ENCODE measurements at regions of chr21 and their contacts with region 1.

Region 1: DNA sequence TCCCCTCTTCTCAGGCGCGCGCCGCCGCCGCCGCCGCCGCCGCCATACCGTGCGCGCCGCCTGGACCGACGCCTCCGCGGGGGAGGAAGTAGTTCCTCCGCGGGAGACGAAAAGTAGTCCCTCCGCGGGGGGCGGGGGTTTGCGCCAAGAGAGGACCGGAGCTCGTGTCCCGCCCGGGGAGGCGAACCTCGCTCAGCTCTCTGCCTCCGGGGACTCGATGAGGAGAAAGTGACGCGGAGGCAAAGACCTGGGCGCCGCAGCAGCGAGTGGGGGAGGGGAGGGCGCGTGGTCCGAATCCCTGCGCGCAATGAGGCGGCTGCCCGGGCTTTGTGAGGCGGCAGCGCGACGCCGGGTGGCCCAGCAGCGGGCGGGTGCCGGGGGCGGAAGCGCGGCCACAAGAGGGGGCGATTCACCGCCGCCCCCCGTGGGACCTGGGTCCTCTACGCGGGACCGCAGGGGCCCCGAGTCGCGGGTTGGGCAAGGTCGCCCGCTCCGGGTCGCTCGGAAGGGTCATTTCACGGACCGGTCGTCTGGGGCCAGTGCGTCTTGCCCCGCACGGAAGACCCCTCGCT is at the start of gene BRWD1:
- DNase-seq: peak; percentile 61
- H3K4me3 ChIP-seq: peak within 1 kb of the TSS; percentile 77 to 93
- H3K27ac ChIP-seq: peak within 1 kb of the TSS; percentile 95 to 96
- H3K4me1 ChIP-seq: peaks cover 4% of the 10 kb centered on the region
- H3K27me3 ChIP-seq: no peaks in the 10 kb centered on the region
- CTCF ChIP-seq: peak in 3 of 4 experiments; percentile 31 to 48 (median 45)
- POLR2A ChIP-seq: peak; percentile 44
- total RNA-seq, gene BRWD1: 43.2 to 83.8 TPM

Region 2: GRCh38 chr21:38679531-38679930 is 634.1 kb before region 1 on chr21:
- intact Hi-C with region 1: no loop called
- DNase-seq: no peak
- H3K4me3 ChIP-seq: no peak overlapping the region
- H3K27ac ChIP-seq: no peak overlapping the region
- H3K4me1 ChIP-seq: no peaks in the 10 kb centered on the region
- H3K27me3 ChIP-seq: peaks cover 2% of the 10 kb centered on the region
- CTCF ChIP-seq: no peak
- POLR2A ChIP-seq: no peak

Region 3: GRCh38 chr21:39349211-39350093 is 35.8 kb after region 1 on chr21:
- intact Hi-C with region 1: loop called (anchors 2 kb)
- DNase-seq: peak; percentile 98
- H3K4me3 ChIP-seq: peak overlapping the region; percentile 67 to 73
- H3K27ac ChIP-seq: peak overlapping the region; percentile 95 to 97
- H3K4me1 ChIP-seq: peaks cover 6% of the 10 kb centered on the region
- H3K27me3 ChIP-seq: no peaks in the 10 kb centered on the region
- CTCF ChIP-seq: peak in 1 of 4 experiments; percentile 12
- POLR2A ChIP-seq: peak; percentile 64

Region 4: GRCh38 chr21:39373644-39374043 is 60.0 kb after region 1 on chr21:
- intact Hi-C with region 1: no loop called
- DNase-seq: no peak
- H3K4me3 ChIP-seq: no peak overlapping the region
- H3K27ac ChIP-seq: no peak overlapping the region
- H3K4me1 ChIP-seq: no peaks in the 10 kb centered on the region
- H3K27me3 ChIP-seq: no peaks in the 10 kb centered on the region
- CTCF ChIP-seq: peak in 2 of 4 experiments; percentile 31 to 47
- POLR2A ChIP-seq: no peak

Region 5: DNA sequence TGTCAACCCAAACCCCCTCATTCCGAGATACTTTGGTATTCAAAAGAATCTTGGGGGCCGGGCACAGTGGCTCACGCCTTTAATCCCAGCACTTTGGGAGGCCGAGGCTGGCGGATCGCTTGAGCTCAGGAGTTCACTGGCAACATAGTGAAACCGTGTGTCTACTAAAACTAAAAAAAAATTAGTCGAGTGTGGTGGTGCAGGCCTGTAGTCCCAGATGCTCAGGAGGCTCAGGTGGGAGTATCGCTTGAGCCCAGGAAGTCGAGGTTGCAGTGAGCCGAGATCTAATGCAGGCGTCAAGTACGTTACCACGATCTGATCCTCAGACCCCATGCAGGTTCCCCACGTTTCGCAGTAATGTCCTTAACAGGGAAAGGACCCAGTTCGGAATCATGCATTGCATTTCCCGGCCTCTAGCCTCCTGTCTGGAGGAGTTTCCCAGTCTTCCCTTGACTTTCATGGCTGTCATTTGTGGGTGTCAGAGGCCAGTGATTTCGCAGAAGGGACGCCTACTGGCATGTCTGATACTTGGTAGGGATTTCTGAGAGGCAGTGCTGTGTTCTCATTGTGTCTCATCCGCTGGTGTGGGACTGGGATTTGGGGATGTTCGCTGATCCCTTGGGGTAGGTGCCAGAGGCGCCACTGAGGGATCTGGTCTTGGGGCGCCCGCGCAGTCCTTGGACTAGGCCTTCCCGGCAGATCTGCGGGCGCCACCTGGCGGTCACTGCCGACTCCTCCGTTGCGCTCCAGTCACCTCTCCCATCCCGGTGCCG is 74.6 kb after region 1 on chr21:
- intact Hi-C with region 1: loop called (anchors 2 kb)
- DNase-seq: peak; percentile 89
- H3K4me3 ChIP-seq: peak overlapping the region; percentile 28 to 39
- H3K27ac ChIP-seq: peak overlapping the region; percentile 56 to 68
- H3K4me1 ChIP-seq: no peaks in the 10 kb centered on the region
- H3K27me3 ChIP-seq: no peaks in the 10 kb centered on the region
- CTCF ChIP-seq: peak; percentile 86 to 95 (median 90)
- POLR2A ChIP-seq: no peak

Region 6: DNA sequence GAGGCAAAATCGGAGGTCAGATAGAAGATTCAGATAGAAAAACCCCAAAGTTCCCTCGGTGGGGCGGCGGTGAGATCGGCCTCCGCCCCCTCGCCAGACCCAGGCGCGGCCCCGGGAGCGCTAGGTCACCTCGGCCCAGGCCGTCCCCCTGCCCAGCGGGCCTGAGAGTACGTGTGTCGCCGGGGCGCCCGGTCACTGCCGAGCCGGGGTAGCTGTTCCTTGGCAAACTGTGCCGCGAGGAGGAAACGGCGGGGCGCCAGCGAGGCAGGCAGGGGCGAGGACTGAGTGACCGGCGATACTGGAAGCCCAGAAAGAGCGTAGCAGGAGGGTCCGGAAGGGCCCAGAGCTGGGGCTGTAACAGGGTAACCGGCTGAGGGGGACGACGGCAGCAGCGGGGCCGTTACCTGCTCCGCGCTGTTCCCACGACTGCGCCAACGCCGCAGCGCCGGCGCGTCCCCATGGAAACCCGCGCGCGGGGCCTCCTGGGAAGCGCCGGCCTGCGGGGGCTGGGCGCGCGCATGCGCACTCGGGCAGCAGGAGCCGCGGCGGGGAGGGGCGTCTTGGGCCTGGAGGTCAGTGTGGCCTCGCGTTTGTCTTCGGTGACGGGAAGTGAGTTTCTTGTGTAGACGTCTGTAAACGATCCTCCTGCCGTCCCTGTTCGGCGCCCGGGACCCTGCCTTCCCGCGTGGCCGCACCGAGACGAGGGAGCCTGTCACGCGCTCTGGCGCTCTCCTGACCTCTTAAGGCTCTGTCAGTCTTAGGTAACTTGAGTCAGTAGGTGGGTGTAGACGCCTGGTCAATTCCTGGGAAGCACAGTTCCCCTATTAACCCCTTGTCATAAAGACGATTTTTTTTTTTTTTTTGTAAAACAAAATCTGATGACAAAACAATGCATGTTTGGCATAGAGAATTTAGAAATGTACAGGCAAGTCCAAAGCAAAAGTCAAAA is 131.9 kb after region 1 on chr21 and contains the start of gene LCA5L:
- intact Hi-C with region 1: loop called (anchors 5 kb)
- DNase-seq: peak; percentile 83
- H3K4me3 ChIP-seq: peak within 1 kb of the TSS; percentile 66 to 69
- H3K27ac ChIP-seq: peak within 1 kb of the TSS; percentile 83 to 86
- H3K4me1 ChIP-seq: no peaks in the 10 kb centered on the region
- H3K27me3 ChIP-seq: no peaks in the 10 kb centered on the region
- CTCF ChIP-seq: peak in 2 of 4 experiments; percentile 17 to 31
- POLR2A ChIP-seq: peak; percentile 88
- total RNA-seq, gene LCA5L: 3.7 to 11.1 TPM

Region 7: DNA sequence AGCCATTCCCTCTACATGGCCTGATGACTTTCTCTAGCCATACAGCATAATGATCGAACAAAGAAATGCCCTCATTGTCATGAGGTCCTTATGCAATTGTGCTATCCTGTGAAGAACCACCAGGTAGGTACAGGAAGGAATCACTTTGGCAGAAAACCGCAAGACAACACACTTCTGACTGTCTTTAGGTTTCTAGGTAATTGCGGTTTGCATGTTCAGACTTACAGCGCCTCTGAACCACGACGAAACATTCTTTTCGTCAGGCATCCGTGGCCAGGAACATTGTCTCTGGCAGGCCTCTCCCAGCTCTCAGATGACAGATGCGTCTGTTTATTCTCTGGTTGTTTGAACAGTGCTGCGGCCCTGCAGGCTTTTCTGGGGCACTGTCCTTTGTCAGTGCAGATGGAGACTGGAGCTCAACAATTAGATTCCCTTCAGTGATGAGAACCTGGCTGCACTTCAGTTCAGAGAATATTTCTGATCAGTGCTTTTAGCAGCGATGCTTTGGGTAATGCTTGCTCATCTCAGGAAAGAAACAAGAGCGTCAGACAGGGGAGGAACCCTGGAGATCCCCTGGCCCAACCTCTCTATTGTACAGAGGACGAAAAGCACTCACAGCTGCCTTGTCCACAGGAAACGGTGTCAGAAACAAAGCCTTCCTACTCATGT is 362.5 kb after region 1 on chr21:
- intact Hi-C with region 1: no loop called
- DNase-seq: peak; percentile 50
- H3K4me3 ChIP-seq: no peak overlapping the region
- H3K27ac ChIP-seq: no peak overlapping the region
- H3K4me1 ChIP-seq: no peaks in the 10 kb centered on the region
- H3K27me3 ChIP-seq: no peaks in the 10 kb centered on the region
- CTCF ChIP-seq: no peak
- POLR2A ChIP-seq: no peak